ENCODE measurements at regions of chr6 and their contacts with region 1.

Region 1: DNA sequence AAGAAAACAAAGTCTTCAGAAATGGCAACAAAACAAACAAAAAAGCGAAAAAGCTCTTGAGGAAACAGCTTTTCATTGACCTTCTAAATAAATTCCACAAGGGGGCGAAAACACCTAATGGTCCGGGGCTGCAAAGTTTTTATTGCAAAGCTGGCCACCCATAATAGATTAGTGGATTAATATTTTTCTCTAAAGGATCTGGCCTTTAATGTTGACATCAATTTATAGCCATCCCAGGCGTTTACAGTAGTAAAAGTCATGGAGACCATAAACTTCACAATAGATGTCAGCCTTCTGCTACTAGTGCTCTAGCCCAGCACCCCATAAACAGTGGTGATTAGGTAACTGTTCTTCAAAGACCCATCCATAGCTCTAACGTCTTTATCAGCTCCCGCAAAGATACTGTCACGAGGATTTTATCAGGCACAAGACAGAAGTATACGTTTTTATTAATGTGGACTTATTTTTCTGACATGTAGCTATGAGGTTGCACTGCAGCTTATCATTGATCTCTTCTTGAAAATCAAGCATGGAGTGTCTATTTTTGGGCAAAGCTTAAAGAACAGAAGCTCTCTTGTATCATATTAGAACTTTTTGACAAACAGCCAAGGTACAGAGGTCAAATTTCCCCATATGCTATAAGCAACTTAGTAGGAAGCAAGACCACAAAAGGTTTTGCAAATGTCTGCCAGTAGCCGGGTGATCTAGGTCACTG is 4.7 kb downstream of the CITED2 start:
- DNase-seq: no peak
- ATAC-seq: no peak
- H3K4me3 ChIP-seq: no peak overlapping the region
- H3K27ac ChIP-seq: no peak overlapping the region
- H3K4me1 ChIP-seq: 0 out of 2 replicates have a peak, but pooled peaks cover 2% of the 10 kb centered on the region
- H3K27me3 ChIP-seq: no peaks in the 10 kb centered on the region
- CTCF ChIP-seq: peak; percentile 43 to 74 (median 60); a peak in 5 of 6 replicates
- EP300 ChIP-seq: no peak
- POLR2A ChIP-seq: no peak
- RAD21 ChIP-seq: peak; percentile 95

Region 2: GRCh38 chr6:138662471-138662870 is 707.3 kb before region 1 on chr6:
- CTCF ChIA-PET with region 1: no interaction called
- POLR2A ChIA-PET with region 1: no interaction called
- RAD21 ChIA-PET with region 1: no interaction called
- SMC1A ChIA-PET with region 1: no interaction called
- in situ Hi-C with region 1: no loop called
- intact Hi-C with region 1: no loop called
- DNase-seq: no peak
- ATAC-seq: no peak
- H3K4me3 ChIP-seq: no peak overlapping the region
- H3K27ac ChIP-seq: no peak overlapping the region
- H3K4me1 ChIP-seq: no peaks in the 10 kb centered on the region
- H3K27me3 ChIP-seq: peaks cover 0 to 3% of the 10 kb centered on the region in 2 experiments; a peak in 1 of 4 replicates
- CTCF ChIP-seq: no peak
- EP300 ChIP-seq: no peak
- POLR2A ChIP-seq: no peak
- RAD21 ChIP-seq: no peak

Region 3: DNA sequence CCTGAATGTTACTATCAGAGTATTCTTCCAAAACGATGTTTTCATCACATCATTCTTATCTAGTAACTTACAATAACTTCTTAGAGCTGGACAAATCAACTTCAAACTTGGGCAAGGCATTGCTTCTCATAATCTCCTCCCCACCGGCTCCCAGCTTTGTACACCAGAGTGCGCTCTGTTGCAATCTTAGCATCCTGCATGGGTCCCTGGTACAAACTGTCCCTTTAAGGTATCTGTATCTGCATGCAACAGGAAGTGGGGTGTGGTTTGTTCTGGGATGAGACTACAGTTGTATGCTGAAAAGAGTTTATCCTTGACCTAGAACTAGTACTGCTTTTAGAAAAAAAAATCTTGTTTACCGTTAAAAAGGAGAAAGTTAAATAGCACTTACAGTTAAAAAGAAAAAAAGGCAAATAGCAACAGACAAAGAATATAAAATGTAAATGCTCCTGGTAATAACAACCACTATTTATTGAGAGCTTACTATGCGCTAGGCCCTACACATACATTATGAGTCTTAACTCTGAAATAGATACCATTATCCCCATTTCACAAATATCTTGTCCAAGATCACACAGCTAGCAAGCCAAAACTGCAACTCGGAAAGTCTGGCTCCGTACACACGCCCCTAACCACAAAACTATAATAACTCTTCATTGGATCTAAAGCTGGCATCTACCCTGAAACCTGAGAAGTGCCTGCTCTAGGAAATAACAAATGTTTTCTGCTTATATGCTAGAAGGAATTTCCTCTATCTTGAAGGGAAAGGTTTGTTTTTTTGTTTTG is 244.6 kb before region 1 on chr6:
- CTCF ChIA-PET with region 1: interaction called, 42 read pairs
- POLR2A ChIA-PET with region 1: no interaction called
- RAD21 ChIA-PET with region 1: interaction called, 17 read pairs
- SMC1A ChIA-PET with region 1: interaction called, 41 read pairs
- in situ Hi-C with region 1: loop called (anchors 5 kb)
- intact Hi-C with region 1: loop called (anchors 1 kb)
- DNase-seq: peak; percentile 54
- ATAC-seq: peak; percentile 100
- H3K4me3 ChIP-seq: no peak overlapping the region
- H3K27ac ChIP-seq: no peak overlapping the region
- H3K4me1 ChIP-seq: peaks cover 4% of the 10 kb centered on the region; the same call in 1 of the 2 replicates
- H3K27me3 ChIP-seq: no peaks in the 10 kb centered on the region
- CTCF ChIP-seq: peak; percentile 51 to 75 (median 66); a peak in 5 of 6 replicates
- EP300 ChIP-seq: 0 out of 4 replicates have a peak, but pooled peaks of 1 of the 2 experiments have one; percentile 41
- POLR2A ChIP-seq: no peak
- RAD21 ChIP-seq: peak; percentile 78

Region 4: GRCh38 chr6:139271056-139271455 is 98.7 kb before region 1 on chr6:
- CTCF ChIA-PET with region 1: interaction called, 10 read pairs
- POLR2A ChIA-PET with region 1: no interaction called
- RAD21 ChIA-PET with region 1: interaction called, 11 read pairs
- SMC1A ChIA-PET with region 1: interaction called, 14 read pairs
- in situ Hi-C with region 1: no loop called
- intact Hi-C with region 1: no loop called
- DNase-seq: no peak
- ATAC-seq: peak; percentile 92
- H3K4me3 ChIP-seq: 0 out of 2 replicates have a peak overlapping the region, but pooled peaks have one; percentile 18
- H3K27ac ChIP-seq: peak overlapping the region; percentile 14; the same call in 1 of the 2 replicates
- H3K4me1 ChIP-seq: peaks cover 6% of the 10 kb centered on the region
- H3K27me3 ChIP-seq: no peaks in the 10 kb centered on the region
- CTCF ChIP-seq: no peak
- EP300 ChIP-seq: 0 out of 4 replicates have a peak, but pooled peaks of 1 of the 2 experiments have one; percentile 31
- POLR2A ChIP-seq: no peak
- RAD21 ChIP-seq: no peak

Region 5: GRCh38 chr6:139597771-139598755 is 228.3 kb after region 1 on chr6:
- CTCF ChIA-PET with region 1: interaction called, 22 read pairs
- POLR2A ChIA-PET with region 1: interaction called, 3 read pairs
- RAD21 ChIA-PET with region 1: interaction called, 11 read pairs
- SMC1A ChIA-PET with region 1: interaction called, 13 read pairs
- in situ Hi-C with region 1: no loop called
- intact Hi-C with region 1: loop called (anchors 2 kb)
- DNase-seq: no peak
- ATAC-seq: no peak
- H3K4me3 ChIP-seq: no peak overlapping the region
- H3K27ac ChIP-seq: no peak overlapping the region
- H3K4me1 ChIP-seq: peaks cover 9% of the 10 kb centered on the region
- H3K27me3 ChIP-seq: no peaks in the 10 kb centered on the region
- CTCF ChIP-seq: no peak
- EP300 ChIP-seq: no peak
- POLR2A ChIP-seq: no peak
- RAD21 ChIP-seq: no peak

Region 6: GRCh38 chr6:139881728-139882211 is 512.0 kb after region 1 on chr6:
- CTCF ChIA-PET with region 1: interaction called, 28 read pairs
- POLR2A ChIA-PET with region 1: no interaction called
- RAD21 ChIA-PET with region 1: interaction called, 24 read pairs
- SMC1A ChIA-PET with region 1: interaction called, 21 read pairs
- in situ Hi-C with region 1: no loop called
- intact Hi-C with region 1: loop called (anchors 5 kb)
- DNase-seq: no peak
- ATAC-seq: peak; percentile 92
- H3K4me3 ChIP-seq: no peak overlapping the region
- H3K27ac ChIP-seq: no peak overlapping the region
- H3K4me1 ChIP-seq: peaks cover 12% of the 10 kb centered on the region
- H3K27me3 ChIP-seq: no peaks in the 10 kb centered on the region
- CTCF ChIP-seq: peak; percentile 46 to 56 (median 55)
- EP300 ChIP-seq: no peak
- POLR2A ChIP-seq: no peak
- RAD21 ChIP-seq: peak; percentile 52

Region 7: DNA sequence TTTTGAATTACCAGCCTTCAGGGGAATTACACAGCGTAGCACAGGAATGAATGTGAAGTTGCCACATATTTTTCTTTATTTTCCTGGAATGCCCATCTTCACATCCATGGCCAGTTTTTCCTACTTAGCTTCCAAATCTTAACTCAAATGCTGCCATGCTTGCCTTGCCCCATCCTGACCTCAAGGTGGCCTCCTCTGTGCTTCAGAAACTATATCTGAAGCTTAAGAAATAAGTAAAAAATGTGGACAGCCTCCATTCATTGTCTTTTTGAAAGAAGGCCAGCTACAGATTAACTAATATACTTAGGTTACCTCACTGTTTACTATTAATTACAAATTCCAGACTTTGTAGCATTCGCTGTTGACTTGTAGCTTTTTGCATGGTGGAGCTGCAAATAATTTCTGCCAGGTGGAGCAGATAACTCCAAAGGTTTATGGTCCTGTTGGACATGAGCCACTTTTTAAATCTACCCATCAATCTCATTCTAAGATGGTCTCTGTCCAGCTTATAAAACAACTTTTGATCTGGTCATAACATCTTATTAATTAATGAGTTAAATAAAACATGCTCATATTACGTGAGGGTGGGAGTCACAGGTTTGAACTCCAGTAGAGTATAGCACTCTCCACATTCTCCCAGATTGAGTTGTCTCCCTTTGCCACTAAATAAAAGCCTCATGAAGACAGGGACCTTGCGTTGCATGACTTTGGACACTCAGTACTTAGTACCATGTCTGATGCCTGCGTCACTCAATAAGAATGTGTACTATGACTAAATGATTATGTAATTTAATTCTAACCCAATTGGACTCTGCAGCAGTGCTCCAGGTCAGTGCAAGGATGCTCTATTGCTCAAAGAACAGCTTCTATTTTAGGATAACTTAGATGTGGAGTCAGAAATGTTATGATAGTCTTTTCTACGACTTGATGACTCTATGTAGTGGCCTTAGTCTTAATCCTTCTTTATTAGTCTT is 683.3 kb after region 1 on chr6:
- CTCF ChIA-PET with region 1: interaction called, 18 read pairs
- POLR2A ChIA-PET with region 1: no interaction called
- RAD21 ChIA-PET with region 1: interaction called, 3 read pairs
- SMC1A ChIA-PET with region 1: interaction called, 7 read pairs
- in situ Hi-C with region 1: no loop called
- intact Hi-C with region 1: no loop called
- DNase-seq: no peak
- ATAC-seq: no peak
- H3K4me3 ChIP-seq: no peak overlapping the region
- H3K27ac ChIP-seq: no peak overlapping the region
- H3K4me1 ChIP-seq: no peaks in the 10 kb centered on the region
- H3K27me3 ChIP-seq: no peaks in the 10 kb centered on the region
- CTCF ChIP-seq: peak; percentile 27 to 40 (median 30); a peak in 4 of 6 replicates
- EP300 ChIP-seq: no peak
- POLR2A ChIP-seq: no peak
- RAD21 ChIP-seq: peak; percentile 69

Measured in GM12878 (cell line).